Esophagus muscularis mucosa (tissue), 4 donors: ENCODE measurements at regions of chrX and their contacts with region 1.

Region 1: DNA sequence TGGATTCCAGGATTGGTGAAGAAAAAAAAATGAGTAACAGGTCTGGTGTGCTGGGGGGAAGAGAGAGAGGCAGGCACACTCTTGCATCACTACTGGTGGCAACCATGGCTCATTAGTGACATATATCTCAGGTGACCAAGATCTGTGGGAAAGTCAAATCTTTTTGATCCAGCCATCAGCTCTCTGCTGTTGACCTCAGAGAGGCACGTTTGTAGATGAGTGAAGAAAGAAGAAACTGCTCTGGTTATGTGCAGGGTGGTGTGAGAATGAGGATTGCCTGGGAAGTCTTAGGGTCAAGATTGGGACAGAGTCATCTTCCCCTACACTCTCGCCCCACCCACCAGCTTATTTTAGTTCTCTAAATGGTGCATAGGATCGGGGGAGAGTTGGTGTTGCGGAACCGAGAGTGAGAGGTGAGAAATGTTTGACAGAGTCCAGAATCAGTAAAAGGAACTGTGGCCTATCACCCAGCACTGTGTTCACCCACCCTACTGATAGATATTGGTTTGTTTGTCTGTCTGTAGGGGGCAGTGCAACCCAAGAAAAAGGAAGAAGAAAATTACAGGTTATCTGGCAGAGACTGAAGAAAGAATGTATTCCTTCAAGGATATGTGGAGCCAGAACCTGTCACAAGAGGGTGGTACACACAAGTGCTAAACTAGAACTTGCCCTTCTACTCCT is 21.9 kb downstream of the ARMCX6 start:
- DNase-seq: no peak
- H3K4me3 ChIP-seq: no peak overlapping the region
- H3K27ac ChIP-seq: no peak overlapping the region
- H3K4me1 ChIP-seq: no peaks in the 10 kb centered on the region
- H3K27me3 ChIP-seq: peaks cover 0 to 7% (median 0%) of the 10 kb centered on the region in 4 donors
- CTCF ChIP-seq: peak; percentile 54 to 63 (median 56)
- EP300 ChIP-seq: no peak
- POLR2A ChIP-seq: no peak

Region 2: DNA sequence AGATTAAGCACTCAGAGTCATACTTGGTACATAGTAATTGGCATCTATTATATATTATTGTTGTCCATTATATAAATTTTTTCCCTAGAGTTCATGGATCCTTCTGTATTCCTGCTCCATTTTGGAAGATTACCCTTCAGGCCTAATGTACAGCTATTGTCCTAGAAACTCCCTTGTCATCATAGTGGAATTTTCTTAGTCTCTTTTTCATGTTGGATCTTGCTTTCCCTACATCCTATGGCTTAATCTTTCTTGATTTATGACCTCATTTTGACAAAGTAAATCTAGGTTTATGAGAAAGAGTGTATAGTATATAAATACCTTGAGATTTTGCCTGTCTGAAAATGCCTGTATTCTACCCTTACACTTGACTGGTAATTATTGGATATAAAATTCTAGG is 88.5 kb before region 1 on chrX:
- intact Hi-C with region 1: no loop called
- DNase-seq: no peak
- H3K4me3 ChIP-seq: no peak overlapping the region
- H3K27ac ChIP-seq: no peak overlapping the region
- H3K4me1 ChIP-seq: no peaks in the 10 kb centered on the region
- H3K27me3 ChIP-seq: no peaks in the 10 kb centered on the region
- CTCF ChIP-seq: no peak
- EP300 ChIP-seq: no peak
- POLR2A ChIP-seq: no peak

Region 3: GRCh38 chrX:101759000-101759399 is 163.1 kb after region 1 on chrX:
- intact Hi-C with region 1: loop called (anchors 5 kb)
- DNase-seq: no peak
- H3K4me3 ChIP-seq: no peak overlapping the region
- H3K27ac ChIP-seq: no peak overlapping the region
- H3K4me1 ChIP-seq: no peaks in the 10 kb centered on the region
- H3K27me3 ChIP-seq: no peaks in the 10 kb centered on the region
- CTCF ChIP-seq: peak; percentile 47 to 56 (median 52)
- EP300 ChIP-seq: no peak
- POLR2A ChIP-seq: no peak

Region 4: GRCh38 chrX:101799387-101799786 is 203.5 kb after region 1 on chrX:
- intact Hi-C with region 1: loop called (anchors 5 kb)
- DNase-seq: peak; percentile 92
- H3K4me3 ChIP-seq: peak overlapping the region in 2 of 4 donors; percentile 20 to 37
- H3K27ac ChIP-seq: no peak overlapping the region
- H3K4me1 ChIP-seq: no peaks in the 10 kb centered on the region
- H3K27me3 ChIP-seq: peaks cover 0 to 2% (median 0%) of the 10 kb centered on the region in 4 donors
- CTCF ChIP-seq: peak; percentile 72 to 79 (median 74)
- EP300 ChIP-seq: no peak
- POLR2A ChIP-seq: no peak